ENCODE measurements at regions of chr10 and their contacts with region 1.

Region 1: GRCh38 chr10:71727738-71728737 is 8.5 kb upstream of the C10orf105 start:
- DNase-seq: no peak
- ATAC-seq: peak; percentile 53
- H3K4me3 Mint-ChIP-seq: peak overlapping the region; percentile 65
- H3K27ac Mint-ChIP-seq: peak overlapping the region; percentile 97
- H3K4me1 Mint-ChIP-seq: peaks cover 73% of the 10 kb centered on the region
- H3K27me3 Mint-ChIP-seq: no peaks in the 10 kb centered on the region

Region 2: GRCh38 chr10:71713135-71714030 is 14.7 kb before region 1 on chr10:
- POLR2A ChIA-PET with region 1: interaction called, 44 read pairs
- DNase-seq: peak; percentile 68
- ATAC-seq: peak; percentile 69
- H3K4me3 Mint-ChIP-seq: peak overlapping the region; percentile 87
- H3K27ac Mint-ChIP-seq: peak overlapping the region; percentile 96
- H3K4me1 Mint-ChIP-seq: peaks cover 36% of the 10 kb centered on the region
- H3K27me3 Mint-ChIP-seq: no peaks in the 10 kb centered on the region

Region 3: GRCh38 chr10:71740069-71740468 is 12.0 kb after region 1 on chr10:
- POLR2A ChIA-PET with region 1: interaction called, 122 read pairs
- DNase-seq: no peak
- ATAC-seq: no peak
- H3K4me3 Mint-ChIP-seq: peak overlapping the region; percentile 5
- H3K27ac Mint-ChIP-seq: peak overlapping the region; percentile 93
- H3K4me1 Mint-ChIP-seq: peaks cover 83% of the 10 kb centered on the region
- H3K27me3 Mint-ChIP-seq: no peaks in the 10 kb centered on the region

Region 4: GRCh38 chr10:71748671-71749191 is 20.7 kb after region 1 on chr10:
- POLR2A ChIA-PET with region 1: interaction called, 122 read pairs
- DNase-seq: peak; percentile 85
- ATAC-seq: peak; percentile 83
- H3K4me3 Mint-ChIP-seq: peak overlapping the region; percentile 79
- H3K27ac Mint-ChIP-seq: peak overlapping the region; percentile 97
- H3K4me1 Mint-ChIP-seq: peaks cover 90% of the 10 kb centered on the region
- H3K27me3 Mint-ChIP-seq: no peaks in the 10 kb centered on the region

Region 5: GRCh38 chr10:71756311-71757191 is 28.5 kb after region 1 on chr10:
- POLR2A ChIA-PET with region 1: interaction called, 25 read pairs
- DNase-seq: no peak
- ATAC-seq: peak; percentile 55
- H3K4me3 Mint-ChIP-seq: peak overlapping the region; percentile 76
- H3K27ac Mint-ChIP-seq: peak overlapping the region; percentile 93
- H3K4me1 Mint-ChIP-seq: peaks cover 79% of the 10 kb centered on the region
- H3K27me3 Mint-ChIP-seq: no peaks in the 10 kb centered on the region

Region 6: DNA sequence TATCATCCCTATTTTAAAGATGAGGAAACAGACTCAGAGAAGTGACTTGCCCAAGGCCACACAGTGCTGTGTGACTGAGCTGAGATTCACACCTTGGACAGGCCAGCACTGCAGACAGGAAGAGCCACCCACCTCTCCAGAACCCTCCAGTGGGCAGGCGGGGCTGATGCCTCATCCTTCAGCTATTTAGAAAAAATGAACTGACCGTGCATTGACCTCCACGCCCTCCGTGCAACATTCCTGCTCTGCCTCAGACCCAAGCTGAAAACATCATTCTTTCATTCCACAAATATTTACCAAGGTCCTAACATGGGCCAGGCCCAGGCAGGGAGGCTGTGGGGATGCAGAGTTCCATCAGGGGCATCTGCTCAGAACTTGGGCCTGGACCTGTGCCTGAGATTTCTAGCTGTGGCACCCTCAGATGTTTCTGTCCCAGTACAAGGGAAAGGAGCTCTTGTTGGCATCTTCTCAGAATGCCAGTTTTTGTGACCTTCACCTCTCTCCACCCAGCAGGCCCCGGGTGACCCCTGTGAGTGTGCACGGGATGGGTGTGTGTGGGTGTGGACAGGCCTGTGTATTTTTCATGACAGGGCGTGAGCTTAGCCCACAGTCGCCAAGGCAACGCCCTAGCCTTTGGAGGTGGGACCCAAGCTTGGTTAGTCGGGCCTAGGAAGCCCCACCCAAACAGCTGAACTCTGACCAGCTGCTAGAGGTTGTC is 38.8 kb after region 1 on chr10:
- POLR2A ChIA-PET with region 1: interaction called, 138 read pairs
- DNase-seq: no peak
- ATAC-seq: no peak
- H3K4me3 Mint-ChIP-seq: peak overlapping the region; percentile 57
- H3K27ac Mint-ChIP-seq: peak overlapping the region; percentile 83
- H3K4me1 Mint-ChIP-seq: peaks cover 75% of the 10 kb centered on the region
- H3K27me3 Mint-ChIP-seq: no peaks in the 10 kb centered on the region

Region 7: GRCh38 chr10:71795248-71795647 is 67.2 kb after region 1 on chr10:
- POLR2A ChIA-PET with region 1: no interaction called
- DNase-seq: no peak
- ATAC-seq: no peak
- H3K4me3 Mint-ChIP-seq: no peak overlapping the region
- H3K27ac Mint-ChIP-seq: no peak overlapping the region
- H3K4me1 Mint-ChIP-seq: peaks cover 29% of the 10 kb centered on the region
- H3K27me3 Mint-ChIP-seq: peaks cover 6% of the 10 kb centered on the region

Region 8: GRCh38 chr10:71878327-71879034 is 150.4 kb after region 1 on chr10:
- POLR2A ChIA-PET with region 1: no interaction called
- DNase-seq: peak; percentile 64
- ATAC-seq: peak; percentile 94
- H3K4me3 Mint-ChIP-seq: peak overlapping the region; percentile 68
- H3K27ac Mint-ChIP-seq: peak overlapping the region; percentile 89
- H3K4me1 Mint-ChIP-seq: peaks cover 23% of the 10 kb centered on the region
- H3K27me3 Mint-ChIP-seq: no peaks in the 10 kb centered on the region

Measured in activated naive CD8-positive, alpha-beta T cell treated with anti-CD3 and anti-CD28 coated beads, Interleukin-2, amount 10 ng/mL, durations not matched to agents 7 days and 5 days (primary cell).